ENCODE measurements at regions of chr6 and their contacts with region 1.

Region 1: DNA sequence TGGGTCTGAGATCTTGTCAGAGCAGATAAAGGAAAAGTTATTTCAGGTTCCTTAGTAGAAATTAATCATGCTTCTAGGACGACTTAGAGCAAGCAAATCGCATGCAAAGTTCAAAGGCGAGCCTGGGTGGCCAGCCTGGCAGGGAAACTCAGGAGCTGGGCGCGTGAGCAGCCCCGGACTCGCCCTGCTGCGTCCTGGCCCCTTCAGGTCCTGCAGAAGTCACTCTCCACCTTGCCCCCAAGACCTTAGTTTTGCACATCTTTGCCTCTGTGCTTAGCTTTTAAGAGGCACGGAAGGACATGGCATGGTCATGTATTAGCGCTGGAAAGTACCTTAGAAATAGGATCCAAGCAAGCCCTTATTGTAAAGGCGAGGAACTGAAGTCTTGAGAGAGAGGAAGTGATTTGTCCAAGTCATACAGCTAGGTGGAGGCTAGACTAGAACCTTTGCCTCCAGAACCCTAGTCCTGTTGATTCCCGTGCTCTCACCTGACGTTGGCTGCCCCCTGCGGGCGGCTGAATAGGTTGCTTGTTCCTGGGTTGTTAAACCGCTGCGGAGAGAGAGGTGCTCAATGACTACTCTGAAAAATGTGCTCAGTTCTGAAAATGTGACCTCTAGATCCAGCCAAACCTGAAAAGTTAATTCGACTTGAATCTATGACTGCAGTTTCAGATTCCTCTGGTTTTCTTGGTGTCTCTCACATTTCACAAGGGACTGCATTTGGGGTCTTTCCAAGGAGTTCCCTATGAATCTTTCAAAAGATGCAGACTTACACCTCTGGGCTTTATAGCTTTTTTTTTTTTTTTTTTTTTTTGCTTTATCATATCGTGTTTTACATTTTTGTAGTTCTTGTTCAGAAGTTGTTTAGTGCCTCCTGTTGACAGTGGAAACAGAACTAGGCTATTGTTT is 2.7 kb downstream of the MYB start:
- DNase-seq: peak; percentile 92
- H3K4me3 Mint-ChIP-seq: peak overlapping the region; percentile 89
- H3K27ac Mint-ChIP-seq: peak overlapping the region; percentile 89
- H3K4me1 Mint-ChIP-seq: peaks cover 15% of the 10 kb centered on the region
- H3K27me3 Mint-ChIP-seq: no peaks in the 10 kb centered on the region

Region 2: GRCh38 chr6:134247231-134247833 is 936.5 kb before region 1 on chr6:
- CTCF ChIA-PET with region 1: no interaction called
- intact Hi-C with region 1: loop called (anchors 1 kb)
- DNase-seq: peak; percentile 94
- H3K4me3 Mint-ChIP-seq: peak overlapping the region; percentile 27
- H3K27ac Mint-ChIP-seq: peak overlapping the region; percentile 97
- H3K4me1 Mint-ChIP-seq: peaks cover 58% of the 10 kb centered on the region
- H3K27me3 Mint-ChIP-seq: no peaks in the 10 kb centered on the region

Region 3: GRCh38 chr6:135014353-135014832 is 169.4 kb before region 1 on chr6:
- CTCF ChIA-PET with region 1: no interaction called
- intact Hi-C with region 1: loop called (anchors 1 kb)
- DNase-seq: peak; percentile 24
- H3K4me3 Mint-ChIP-seq: peak overlapping the region; percentile 2
- H3K27ac Mint-ChIP-seq: no peak overlapping the region
- H3K4me1 Mint-ChIP-seq: peaks cover 60% of the 10 kb centered on the region
- H3K27me3 Mint-ChIP-seq: no peaks in the 10 kb centered on the region

Region 4: DNA sequence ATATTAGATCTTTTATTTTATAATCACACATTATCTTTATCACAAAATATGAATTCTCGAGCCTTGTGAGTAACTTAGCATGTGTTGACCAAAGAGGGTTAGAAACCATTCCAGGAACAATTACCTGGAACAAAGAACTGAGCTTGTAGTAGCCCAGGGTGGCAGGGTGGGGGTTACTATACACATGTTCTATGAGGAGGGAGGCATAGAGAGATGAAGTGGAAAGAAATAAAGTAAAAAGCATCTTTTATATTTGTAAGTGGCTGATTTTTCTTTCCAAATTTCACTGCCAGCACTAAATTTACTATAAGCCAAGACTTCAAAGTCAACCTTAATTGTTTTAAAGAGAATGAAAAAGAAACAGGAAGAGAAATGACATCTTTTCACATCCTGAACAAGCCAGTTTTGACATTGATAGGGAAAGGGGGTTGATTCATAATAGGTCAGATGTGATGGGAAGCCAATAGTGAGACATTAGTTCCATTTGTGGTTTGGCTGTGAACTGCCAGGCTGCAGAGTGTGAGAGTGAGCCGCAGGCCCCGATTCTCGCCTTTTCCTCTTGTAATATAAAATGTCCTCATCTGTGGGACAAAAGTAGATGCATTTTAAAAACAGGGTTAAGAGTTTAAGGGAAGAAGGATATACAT is 55.4 kb before region 1 on chr6:
- CTCF ChIA-PET with region 1: interaction called, 3 read pairs
- intact Hi-C with region 1: loop called (anchors 1 kb)
- DNase-seq: peak; percentile 83
- H3K4me3 Mint-ChIP-seq: peak overlapping the region; percentile 26
- H3K27ac Mint-ChIP-seq: peak overlapping the region; percentile 74
- H3K4me1 Mint-ChIP-seq: peaks cover 43% of the 10 kb centered on the region
- H3K27me3 Mint-ChIP-seq: no peaks in the 10 kb centered on the region

Region 5: GRCh38 chr6:135195522-135195921 is 11.7 kb after region 1 on chr6:
- CTCF ChIA-PET with region 1: interaction called, 13 read pairs
- intact Hi-C with region 1: loop called (anchors 1 kb)
- DNase-seq: no peak
- H3K4me3 Mint-ChIP-seq: no peak overlapping the region
- H3K27ac Mint-ChIP-seq: no peak overlapping the region
- H3K4me1 Mint-ChIP-seq: peaks cover 19% of the 10 kb centered on the region
- H3K27me3 Mint-ChIP-seq: no peaks in the 10 kb centered on the region

Region 6: DNA sequence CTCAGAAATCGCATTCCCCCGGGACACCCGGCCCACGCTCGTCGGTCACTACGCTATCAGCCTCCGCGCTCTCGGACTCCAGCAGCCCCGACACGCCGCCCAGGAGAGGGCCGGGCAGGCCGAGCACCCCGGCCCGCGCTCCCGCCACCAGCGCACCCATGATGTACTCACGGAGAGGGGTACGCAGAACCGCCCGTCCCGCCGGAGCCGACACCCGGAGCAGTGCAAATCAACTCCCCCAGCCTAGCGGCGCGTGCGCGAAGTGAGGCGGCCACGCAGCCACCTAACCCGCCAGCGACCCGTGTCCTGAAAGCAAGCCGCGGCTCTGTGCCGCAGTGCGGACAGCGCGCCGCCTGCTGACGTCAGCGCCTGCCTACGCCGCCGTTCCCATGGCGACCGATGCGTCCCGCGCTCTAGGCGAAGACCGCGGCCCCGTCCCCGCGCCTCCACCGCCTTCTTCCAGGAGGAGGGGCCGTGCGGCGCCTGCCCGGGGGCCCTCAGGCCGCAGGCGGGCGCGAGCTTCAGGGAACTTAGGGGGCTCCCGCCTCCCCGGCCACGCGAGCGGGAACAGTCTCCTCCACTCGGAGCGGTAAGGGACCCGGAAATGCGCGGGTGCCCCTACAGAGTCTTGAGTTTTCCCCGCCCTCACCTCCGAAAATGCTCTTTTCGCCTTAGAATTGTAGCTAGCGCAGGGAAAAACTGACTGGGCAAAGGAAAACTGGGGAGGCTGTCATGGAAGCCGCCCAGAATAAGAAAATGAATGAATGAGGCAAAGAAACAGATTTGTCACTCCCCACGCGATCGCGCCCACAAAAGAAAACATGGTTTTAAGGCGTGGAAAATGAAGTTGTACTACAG is 313.9 kb after region 1 on chr6 and contains the start of gene AHI1:
- CTCF ChIA-PET with region 1: no interaction called
- intact Hi-C with region 1: loop called (anchors 5 kb)
- DNase-seq: peak; percentile 85
- H3K4me3 Mint-ChIP-seq: no peak within 1 kb of the TSS
- H3K27ac Mint-ChIP-seq: no peak within 1 kb of the TSS
- H3K4me1 Mint-ChIP-seq: peaks cover 16% of the 10 kb centered on the region
- H3K27me3 Mint-ChIP-seq: no peaks in the 10 kb centered on the region
- total RNA-seq, gene AHI1: 17.8 to 18.8 TPM

Measured in activated naive CD4-positive, alpha-beta T cell treated with anti-CD3 and anti-CD28 coated beads for 36 hours (primary cell).